ENCODE measurements at regions of chr7 and their contacts with region 1.

Region 1: DNA sequence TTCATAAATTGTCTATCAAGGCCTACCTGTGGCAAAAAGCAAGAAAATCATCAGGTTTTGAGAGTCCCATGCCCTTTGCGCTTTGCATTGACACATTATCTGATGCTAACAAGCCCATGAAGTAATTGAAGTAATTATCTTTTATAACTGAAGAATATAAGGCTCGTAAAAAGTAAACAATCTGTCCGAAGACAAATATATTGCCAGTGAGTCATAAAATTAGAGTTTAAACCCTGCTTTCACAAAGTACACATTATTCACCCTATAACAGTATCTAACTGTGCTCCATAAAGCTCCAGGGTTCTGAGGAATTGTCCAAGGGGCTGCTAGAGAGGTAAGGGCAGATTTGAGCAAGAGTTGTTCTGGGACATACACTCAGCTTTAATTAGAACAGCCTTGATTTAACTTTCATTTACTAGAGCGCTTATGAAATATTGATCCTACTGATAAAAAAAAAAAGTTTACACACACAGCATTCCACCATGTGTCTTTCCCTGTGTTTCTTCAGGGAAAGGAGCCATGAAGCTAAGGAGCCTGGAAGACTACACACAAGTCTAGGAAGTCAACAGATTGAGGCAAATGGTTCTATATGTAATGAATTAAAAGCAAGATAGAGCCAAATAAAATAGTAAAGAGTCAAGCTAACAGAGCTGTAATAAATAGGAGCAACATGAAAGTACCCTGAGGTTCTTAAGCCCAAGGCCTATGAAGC is 102.5 kb upstream of the PPP1R3A start:
- DNase-seq: no peak
- ATAC-seq: peak; percentile 51; the same call in 1 of the 2 replicates
- H3K4me3 ChIP-seq: no peak overlapping the region
- H3K27ac ChIP-seq: no peak overlapping the region
- H3K4me1 ChIP-seq: 0 out of 2 replicates have a peak, but pooled peaks cover 3% of the 10 kb centered on the region
- H3K27me3 ChIP-seq: no peaks in the 10 kb centered on the region
- CTCF ChIP-seq: no peak

Region 2: DNA sequence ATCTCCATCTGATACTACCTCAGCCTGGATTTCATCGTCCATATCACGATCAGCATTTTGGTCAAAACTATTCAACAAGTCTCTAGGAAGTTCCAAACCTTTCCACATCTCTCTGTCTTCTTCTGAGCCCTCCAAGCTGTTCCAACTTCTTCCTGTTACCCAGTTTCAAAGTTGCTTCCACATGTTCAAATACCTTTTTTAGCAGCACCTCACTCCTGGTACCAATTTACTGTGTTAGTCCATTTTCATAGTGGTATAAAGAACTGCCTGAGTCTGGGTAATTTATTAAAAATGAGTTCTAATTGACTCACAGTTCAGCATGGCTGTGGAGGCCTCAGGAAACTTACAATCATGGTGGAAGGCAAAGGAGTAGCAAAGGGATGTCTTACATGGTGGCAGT is 61.4 kb before region 1 on chr7:
- CTCF ChIA-PET with region 1: no interaction called
- POLR2A ChIA-PET with region 1: interaction called, 14 read pairs
- in situ Hi-C with region 1: no loop called
- intact Hi-C with region 1: no loop called
- DNase-seq: no peak
- ATAC-seq: no peak
- H3K4me3 ChIP-seq: no peak overlapping the region
- H3K27ac ChIP-seq: no peak overlapping the region
- H3K4me1 ChIP-seq: no peaks in the 10 kb centered on the region
- H3K27me3 ChIP-seq: no peaks in the 10 kb centered on the region
- CTCF ChIP-seq: no peak

Measured in Panc1 (cell line).